GM12878 (cell line): ENCODE measurements at regions of chr16 and their contacts with region 1.

Region 1: GRCh38 chr16:52191531-52192134 is 355.3 kb downstream of the TOX3 start:
- DNase-seq: peak; percentile 15
- ATAC-seq: peak; percentile 69
- H3K4me3 ChIP-seq: no peak overlapping the region
- H3K27ac ChIP-seq: no peak overlapping the region
- H3K4me1 ChIP-seq: no peaks in the 10 kb centered on the region
- H3K27me3 ChIP-seq: no peaks in the 10 kb centered on the region
- CTCF ChIP-seq: peak; percentile 91
- EP300 ChIP-seq: no peak
- POLR2A ChIP-seq: no peak
- RAD21 ChIP-seq: peak; percentile 85

Region 2: DNA sequence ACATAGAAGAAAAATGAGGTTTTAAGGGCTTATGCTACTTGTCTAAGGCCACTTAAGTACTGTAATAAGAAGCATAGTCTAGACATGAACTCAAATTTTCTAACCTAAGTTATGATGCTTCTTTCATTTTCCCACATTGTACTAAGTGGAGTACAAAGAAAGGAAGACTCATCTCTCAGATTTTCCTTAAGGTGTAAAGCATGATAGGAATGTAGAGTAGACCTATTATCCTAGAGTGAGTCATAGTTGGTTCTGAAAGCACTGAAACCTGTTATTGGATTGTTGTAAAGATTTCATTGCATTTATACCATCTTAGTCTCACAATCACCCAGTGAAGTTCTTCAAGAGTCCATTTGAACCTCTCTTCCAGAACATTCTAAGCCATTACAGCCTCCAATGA is 11.5 kb after region 1 on chr16:
- CTCF ChIA-PET with region 1: interaction called, 21 read pairs
- POLR2A ChIA-PET with region 1: no interaction called
- RAD21 ChIA-PET with region 1: no interaction called
- SMC1A ChIA-PET with region 1: interaction called, 16 read pairs
- in situ Hi-C with region 1: no loop called
- intact Hi-C with region 1: no loop called
- DNase-seq: no peak
- ATAC-seq: no peak
- H3K4me3 ChIP-seq: no peak overlapping the region
- H3K27ac ChIP-seq: no peak overlapping the region
- H3K4me1 ChIP-seq: no peaks in the 10 kb centered on the region
- H3K27me3 ChIP-seq: no peaks in the 10 kb centered on the region
- CTCF ChIP-seq: no peak
- EP300 ChIP-seq: no peak
- POLR2A ChIP-seq: no peak
- RAD21 ChIP-seq: no peak

Region 3: DNA sequence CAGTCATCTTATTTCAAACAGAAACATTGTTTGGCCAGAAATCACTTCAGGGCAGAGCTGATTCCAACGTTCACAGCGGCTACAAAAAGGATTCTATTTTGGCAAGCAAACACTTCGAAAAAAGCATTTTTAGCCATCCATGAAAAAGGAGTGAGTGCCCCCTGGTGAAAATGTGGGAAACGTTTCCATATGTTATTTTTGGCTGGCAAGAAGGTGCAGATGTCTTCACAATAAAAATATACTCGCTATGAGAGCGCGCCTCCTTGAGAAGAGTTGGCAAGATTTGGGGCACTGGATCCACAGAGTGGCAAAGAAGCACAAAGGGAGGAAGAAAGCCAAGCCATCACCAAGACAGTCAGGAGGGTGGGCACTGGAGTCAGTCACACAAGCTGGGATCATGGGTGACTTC is 670.0 kb after region 1 on chr16:
- CTCF ChIA-PET with region 1: interaction called, 16 read pairs
- POLR2A ChIA-PET with region 1: no interaction called
- RAD21 ChIA-PET with region 1: interaction called, 7 read pairs
- SMC1A ChIA-PET with region 1: interaction called, 6 read pairs
- in situ Hi-C with region 1: no loop called
- intact Hi-C with region 1: no loop called
- DNase-seq: no peak
- ATAC-seq: no peak
- H3K4me3 ChIP-seq: no peak overlapping the region
- H3K27ac ChIP-seq: no peak overlapping the region
- H3K4me1 ChIP-seq: no peaks in the 10 kb centered on the region
- H3K27me3 ChIP-seq: no peaks in the 10 kb centered on the region
- CTCF ChIP-seq: no peak
- EP300 ChIP-seq: no peak
- POLR2A ChIP-seq: no peak
- RAD21 ChIP-seq: no peak

Region 4: DNA sequence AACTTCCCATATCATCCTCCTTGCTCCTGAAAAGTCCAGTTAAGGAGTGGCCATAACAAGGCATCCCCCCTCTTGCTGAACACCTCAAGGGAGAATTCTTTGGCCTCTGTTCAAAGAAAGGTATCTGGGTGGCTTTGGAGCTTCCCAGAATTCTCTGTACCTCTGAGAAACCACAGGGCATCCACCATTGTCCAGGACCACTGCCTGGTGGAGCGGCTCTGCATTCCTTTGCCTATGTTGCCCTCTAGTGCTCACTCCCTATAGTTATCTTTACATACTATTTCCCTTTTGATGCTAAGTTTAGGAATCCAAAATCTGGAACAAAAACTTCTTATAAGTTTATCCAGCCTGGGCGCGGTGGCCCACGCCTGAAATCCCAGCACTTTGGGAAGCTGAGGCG is 830.7 kb after region 1 on chr16:
- CTCF ChIA-PET with region 1: interaction called, 27 read pairs
- POLR2A ChIA-PET with region 1: no interaction called
- RAD21 ChIA-PET with region 1: interaction called, 10 read pairs
- SMC1A ChIA-PET with region 1: interaction called, 9 read pairs
- in situ Hi-C with region 1: loop called (anchors 10 kb)
- intact Hi-C with region 1: loop called (anchors 1 kb)
- DNase-seq: no peak
- ATAC-seq: peak; percentile 82
- H3K4me3 ChIP-seq: no peak overlapping the region
- H3K27ac ChIP-seq: no peak overlapping the region
- H3K4me1 ChIP-seq: no peaks in the 10 kb centered on the region
- H3K27me3 ChIP-seq: no peaks in the 10 kb centered on the region
- CTCF ChIP-seq: peak; percentile 46 to 63 (median 46); a peak in 4 of 6 replicates
- EP300 ChIP-seq: no peak
- POLR2A ChIP-seq: no peak
- RAD21 ChIP-seq: peak; percentile 78

Region 5: GRCh38 chr16:53282975-53283946 is 1091.6 kb after region 1 on chr16:
- CTCF ChIA-PET with region 1: interaction called, 4 read pairs
- POLR2A ChIA-PET with region 1: no interaction called
- RAD21 ChIA-PET with region 1: interaction called, 4 read pairs
- SMC1A ChIA-PET with region 1: no interaction called
- in situ Hi-C with region 1: loop called (anchors 25 kb)
- intact Hi-C with region 1: no loop called
- DNase-seq: peak; percentile 3
- ATAC-seq: no peak
- H3K4me3 ChIP-seq: no peak overlapping the region
- H3K27ac ChIP-seq: no peak overlapping the region
- H3K4me1 ChIP-seq: no peaks in the 10 kb centered on the region
- H3K27me3 ChIP-seq: no peaks in the 10 kb centered on the region
- CTCF ChIP-seq: peak; percentile 34 to 60 (median 38); a peak in 4 of 6 replicates
- EP300 ChIP-seq: no peak
- POLR2A ChIP-seq: no peak
- RAD21 ChIP-seq: peak; percentile 37; the same call in 1 of the 2 replicates